ENCODE measurements at regions of chr7 and their contacts with region 1.

Region 1: DNA sequence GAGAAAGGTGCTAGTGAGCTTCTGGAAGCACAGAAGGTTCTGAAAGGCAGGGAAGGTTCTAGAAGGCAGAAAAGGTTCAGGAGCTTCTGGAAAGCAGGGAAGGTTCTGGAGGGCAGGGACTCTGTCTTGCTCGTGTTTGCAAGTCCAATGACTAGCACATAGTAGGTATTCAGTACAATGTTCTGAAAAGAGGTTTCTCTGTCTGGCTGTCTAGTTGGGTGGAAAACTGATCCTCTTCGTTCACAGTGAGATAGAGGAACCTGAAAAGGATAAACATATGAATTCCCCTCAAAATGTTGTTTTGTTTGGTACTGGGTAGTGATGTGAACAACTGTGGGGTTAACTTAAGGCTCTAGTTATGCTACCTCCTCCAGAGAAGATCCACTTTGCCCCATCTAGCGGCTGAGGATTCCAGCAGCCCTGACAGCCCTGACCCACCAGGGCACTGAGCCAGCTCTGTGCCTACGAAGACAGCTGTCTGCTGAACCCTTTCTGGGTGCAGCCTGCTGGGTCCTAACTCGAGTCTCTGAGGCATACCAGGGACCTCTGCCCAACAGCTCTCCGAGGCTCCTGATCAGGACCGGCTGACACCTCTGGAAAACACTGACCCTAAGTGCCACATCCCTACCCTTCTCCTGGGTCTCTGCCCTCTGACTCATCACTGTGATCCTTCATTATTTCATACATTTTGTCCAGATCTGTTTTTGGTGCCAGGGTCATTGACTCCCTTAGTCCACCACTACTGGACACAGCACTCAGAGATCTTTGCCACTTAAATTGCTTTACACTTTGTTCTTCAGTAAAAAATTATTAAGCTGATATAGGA is 15.4 kb downstream of the PTPRN2 start:
- DNase-seq: no peak
- H3K4me3 ChIP-seq: no peak overlapping the region
- CTCF ChIP-seq: no peak

Region 2: DNA sequence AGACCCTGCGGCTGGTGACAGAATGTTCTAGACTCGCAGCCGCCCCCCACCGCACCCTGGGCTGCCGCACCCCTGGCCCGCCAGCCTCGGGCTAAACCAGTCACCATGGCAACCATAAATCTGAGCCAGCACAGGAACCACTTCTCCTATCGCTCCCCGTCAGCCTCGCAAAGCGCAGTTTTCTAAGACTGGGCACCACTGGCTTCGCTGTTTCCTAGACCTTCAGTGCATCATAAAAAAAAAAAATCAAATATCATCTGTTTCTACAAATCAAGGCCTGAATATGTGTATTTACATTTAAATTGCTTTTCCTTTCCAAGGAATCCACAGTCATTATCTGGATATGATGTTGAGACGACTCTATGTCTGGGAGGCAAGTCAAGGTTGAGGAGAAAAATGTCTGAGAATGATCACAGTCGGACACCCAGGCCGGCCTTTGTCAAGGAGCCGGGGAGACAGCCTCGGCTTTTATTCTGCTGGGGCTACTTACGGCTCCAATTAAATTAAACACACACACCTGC is 84.5 kb before region 1 on chr7:
- in situ Hi-C with region 1: loop called (anchors 5 kb)
- DNase-seq: no peak
- H3K4me3 ChIP-seq: no peak overlapping the region
- CTCF ChIP-seq: no peak

Region 3: DNA sequence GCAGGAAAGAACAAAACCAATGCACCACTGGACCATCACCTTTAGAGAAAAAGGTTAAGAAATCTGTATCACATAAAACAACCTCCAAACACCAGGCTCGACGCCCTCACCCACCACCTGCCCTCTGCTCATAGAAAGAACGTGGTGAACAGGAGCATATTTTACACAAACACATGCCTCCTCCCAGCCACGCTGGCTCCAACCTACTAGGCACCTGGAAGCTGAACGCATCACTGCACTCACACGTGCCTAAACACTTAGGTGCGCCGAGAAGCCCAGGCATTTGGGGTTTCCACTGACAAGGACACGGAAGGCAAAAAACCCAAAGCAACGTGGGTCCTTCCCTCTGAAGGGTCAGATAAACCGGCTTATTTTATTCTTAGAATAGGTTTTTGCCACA is 40.6 kb before region 1 on chr7:
- in situ Hi-C with region 1: no loop called
- DNase-seq: no peak
- H3K4me3 ChIP-seq: no peak overlapping the region
- CTCF ChIP-seq: no peak

Measured in astrocyte of the cerebellum (primary cell).